Posterior vena cava (tissue), 2 donors: ENCODE measurements at regions of chr18 and their contacts with region 1.

Region 1: DNA sequence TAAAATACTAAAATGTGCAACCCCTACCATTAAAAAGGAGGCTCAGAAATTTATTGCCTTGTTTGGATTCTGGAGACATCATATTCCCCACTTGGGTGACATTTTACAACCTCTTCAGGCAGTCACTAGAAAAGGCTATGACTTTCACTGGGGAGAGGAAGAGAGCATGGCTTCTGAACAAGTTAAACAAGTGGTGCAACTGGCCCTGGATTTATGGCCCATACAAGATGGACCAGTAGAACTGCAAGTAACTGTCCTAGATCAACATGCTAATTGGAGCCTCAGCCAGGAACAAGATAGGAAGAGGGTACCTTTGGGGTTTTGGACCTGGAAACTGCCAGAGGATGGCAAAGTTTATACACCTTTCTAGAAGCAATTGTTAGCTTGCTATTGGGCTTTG is 4.0 kb upstream of the DSG2 start:
- DNase-seq: no peak

Region 2: GRCh38 chr18:31469629-31470028 is 24.3 kb before region 1 on chr18:
- intact Hi-C with region 1: loop called in 1 of 2 experiments (anchors 2 kb)
- DNase-seq: no peak

Region 3: DNA sequence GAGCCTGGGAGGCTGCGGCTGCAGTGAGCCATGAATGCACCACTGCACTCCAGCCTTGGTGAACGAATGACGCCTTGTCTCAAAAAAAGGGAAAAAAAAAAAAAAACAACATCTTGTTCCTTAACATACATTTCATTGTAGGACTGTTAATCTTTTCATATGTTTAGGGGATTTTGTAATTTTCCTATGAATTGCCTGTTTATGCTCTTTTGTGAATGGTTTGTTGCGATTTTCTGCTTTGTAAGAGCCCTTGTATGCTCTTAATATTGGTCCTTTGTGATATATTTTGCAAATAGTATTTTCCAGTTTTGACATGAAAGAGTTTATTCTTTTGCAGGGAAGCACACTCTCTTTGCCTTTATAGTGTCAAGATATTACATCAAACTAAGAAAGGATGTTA is 399.0 kb after region 1 on chr18:
- intact Hi-C with region 1: no loop called
- DNase-seq: no peak